GM10248 (cell line): ENCODE measurements at regions of chr22 and their contacts with region 1.

Region 1: GRCh38 chr22:30386960-30387827 is at the start of gene RNF215:
- DNase-seq: peak; percentile 96
- CTCF ChIP-seq: peak; percentile 93

Region 2: DNA sequence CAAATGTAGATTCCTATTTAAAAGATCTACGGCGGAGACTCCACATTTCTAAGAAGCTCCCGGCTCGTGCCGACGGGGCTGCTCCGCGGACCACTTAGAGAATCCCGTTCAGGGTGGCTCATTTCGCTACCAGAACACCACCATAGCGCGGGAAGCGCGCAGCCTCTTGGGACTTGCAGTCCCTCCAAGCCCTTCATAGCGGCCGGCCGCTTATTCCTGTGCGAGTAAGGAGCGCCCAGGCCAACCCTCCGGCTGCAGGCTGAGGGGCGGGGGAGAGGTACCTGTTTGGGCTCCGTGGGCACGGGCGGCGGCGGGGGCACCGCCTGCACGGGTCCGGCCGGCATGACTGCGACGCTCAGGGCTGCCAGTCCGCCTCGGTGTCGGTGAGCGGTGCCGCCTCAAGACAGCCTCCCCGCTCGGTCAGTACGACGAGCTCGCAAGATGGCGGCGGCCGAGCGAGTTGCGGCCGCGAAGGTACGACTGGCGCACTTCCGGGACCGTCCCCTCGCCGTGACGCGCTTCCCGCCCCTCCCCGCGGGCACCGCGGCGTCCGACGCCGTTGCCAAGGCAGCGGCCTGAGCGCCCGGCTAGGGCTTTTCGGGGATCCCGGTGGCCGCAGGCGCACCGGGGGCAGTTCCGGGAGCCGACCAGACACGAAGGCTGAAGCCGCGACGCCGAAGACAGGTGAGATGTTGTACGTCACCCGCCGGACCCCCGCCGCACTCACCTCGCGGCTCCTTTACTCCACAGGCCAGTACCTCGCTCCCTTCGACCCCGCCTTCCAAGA is 30.6 kb before region 1 on chr22 and contains the starts of genes CCDC157 and SF3A1:
- CTCF ChIA-PET with region 1: interaction called, 10 read pairs
- POLR2A ChIA-PET with region 1: no interaction called
- DNase-seq: peak; percentile 97
- CTCF ChIP-seq: no peak

Region 3: DNA sequence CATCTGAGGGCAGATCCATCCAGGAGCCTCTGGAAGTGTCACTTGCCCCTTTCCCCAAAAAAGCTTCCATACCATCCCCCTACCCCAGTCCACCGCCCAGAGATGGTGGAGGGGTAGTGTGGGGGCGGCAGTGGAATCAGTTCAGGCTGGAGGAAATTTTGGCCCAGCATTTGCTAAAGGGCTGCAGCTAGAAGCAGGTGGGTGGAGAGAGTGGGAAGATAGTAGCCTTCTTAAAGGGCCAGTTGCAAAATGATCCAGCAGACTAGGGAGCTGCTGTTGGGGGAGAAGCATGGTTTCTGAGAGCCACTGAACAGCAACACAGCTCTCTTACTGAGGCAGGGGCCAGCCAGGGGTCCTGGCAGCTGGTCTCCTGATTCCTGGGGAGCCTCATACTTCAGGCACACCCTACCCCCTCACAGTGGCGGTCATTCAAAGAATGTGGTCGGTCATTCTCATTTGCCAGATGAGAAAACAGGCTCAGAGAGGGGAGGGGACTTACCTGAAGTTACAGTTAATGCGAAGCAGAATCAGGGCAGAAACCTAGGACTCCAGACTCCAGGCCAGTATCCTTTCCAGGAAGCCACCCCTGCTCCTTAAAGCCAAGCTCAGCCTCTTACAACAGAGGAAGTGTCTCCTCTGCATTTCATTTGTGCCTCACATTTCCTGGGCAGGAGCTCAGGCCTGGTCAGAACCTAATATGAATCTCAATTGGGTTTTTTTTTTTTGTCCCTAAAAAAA is 15.0 kb after region 1 on chr22:
- CTCF ChIA-PET with region 1: interaction called, 22 read pairs
- POLR2A ChIA-PET with region 1: no interaction called
- DNase-seq: no peak
- CTCF ChIP-seq: no peak

Region 4: GRCh38 chr22:30423982-30424963 is 37.1 kb after region 1 on chr22:
- CTCF ChIA-PET with region 1: interaction called, 21 read pairs
- POLR2A ChIA-PET with region 1: no interaction called
- DNase-seq: peak; percentile 98
- CTCF ChIP-seq: no peak

Region 5: GRCh38 chr22:30459181-30460052 is 72.2 kb after region 1 on chr22:
- CTCF ChIA-PET with region 1: no interaction called
- POLR2A ChIA-PET with region 1: no interaction called
- DNase-seq: no peak
- CTCF ChIP-seq: no peak

Region 6: GRCh38 chr22:30876915-30877553 is 489.8 kb after region 1 on chr22:
- CTCF ChIA-PET with region 1: no interaction called
- POLR2A ChIA-PET with region 1: no interaction called
- DNase-seq: no peak
- CTCF ChIP-seq: no peak